A673 (cell line): ENCODE measurements at regions of chr12 and their contacts with region 1.

Region 1: DNA sequence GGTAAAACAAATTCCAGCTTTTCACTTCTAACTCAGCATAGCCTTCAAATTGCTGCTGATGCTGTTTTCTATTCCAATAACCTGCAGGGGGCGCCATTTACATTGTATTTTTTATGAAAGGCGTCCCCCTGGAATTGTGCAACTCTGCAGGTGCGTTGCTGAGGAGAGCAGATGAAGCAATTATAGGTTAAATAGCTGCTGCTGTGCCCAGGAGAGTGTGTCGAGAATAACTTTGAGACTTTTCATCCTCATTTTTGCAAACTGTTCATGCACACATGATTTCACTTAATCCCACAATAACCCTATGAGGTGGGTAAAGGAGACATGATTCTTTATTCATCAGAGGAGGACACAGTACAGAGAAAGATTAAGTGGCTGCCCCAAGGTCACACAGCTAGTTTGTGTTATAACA is 75.7 kb downstream of the MYRFL start:
- DNase-seq: peak; percentile 86
- H3K4me3 ChIP-seq: no peak overlapping the region
- H3K27ac ChIP-seq: no peak overlapping the region
- H3K4me1 ChIP-seq: peaks cover 14% of the 10 kb centered on the region
- H3K27me3 ChIP-seq: peaks cover 30% of the 10 kb centered on the region
- CTCF ChIP-seq: peak; percentile 91

Region 2: DNA sequence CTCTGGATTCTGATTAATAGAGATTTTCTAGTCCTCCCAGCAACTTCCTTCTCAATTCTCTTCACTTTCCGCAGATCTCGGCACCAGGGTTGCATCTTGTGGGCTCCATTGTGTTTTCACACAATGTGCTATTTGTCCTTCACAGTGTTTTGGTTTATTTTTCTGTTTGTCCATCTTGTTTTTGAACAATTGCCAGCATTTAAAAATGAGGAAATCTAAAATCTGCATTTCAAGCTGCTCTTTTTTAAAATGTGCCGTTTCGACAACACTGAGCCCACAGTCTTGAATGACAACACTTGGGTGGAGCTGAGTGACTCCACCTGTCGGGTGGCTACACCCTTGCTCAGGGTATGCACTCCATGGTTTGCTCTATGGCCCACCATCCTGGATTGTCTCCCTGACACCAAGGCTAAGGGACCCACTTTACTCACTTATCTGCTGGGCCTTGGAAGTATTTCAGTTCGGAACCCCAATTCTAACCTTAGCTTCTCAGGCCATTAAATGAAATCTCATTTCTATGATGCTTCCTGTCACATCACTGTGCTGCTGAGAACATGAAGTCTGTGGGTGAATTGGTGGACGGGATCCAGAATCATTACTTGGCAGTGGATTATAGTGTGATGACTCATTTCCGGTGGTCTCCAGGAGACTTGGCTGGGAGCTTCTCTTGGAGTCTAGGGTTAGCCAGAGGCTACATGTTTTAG is 79.1 kb before region 1 on chr12:
- CTCF ChIA-PET with region 1: no interaction called
- POLR2A ChIA-PET with region 1: no interaction called
- intact Hi-C with region 1: no loop called
- DNase-seq: peak; percentile 97
- H3K4me3 ChIP-seq: peak overlapping the region; percentile 32
- H3K27ac ChIP-seq: peak overlapping the region; percentile 81
- H3K4me1 ChIP-seq: peaks cover 32% of the 10 kb centered on the region
- H3K27me3 ChIP-seq: no peaks in the 10 kb centered on the region
- CTCF ChIP-seq: no peak

Region 3: DNA sequence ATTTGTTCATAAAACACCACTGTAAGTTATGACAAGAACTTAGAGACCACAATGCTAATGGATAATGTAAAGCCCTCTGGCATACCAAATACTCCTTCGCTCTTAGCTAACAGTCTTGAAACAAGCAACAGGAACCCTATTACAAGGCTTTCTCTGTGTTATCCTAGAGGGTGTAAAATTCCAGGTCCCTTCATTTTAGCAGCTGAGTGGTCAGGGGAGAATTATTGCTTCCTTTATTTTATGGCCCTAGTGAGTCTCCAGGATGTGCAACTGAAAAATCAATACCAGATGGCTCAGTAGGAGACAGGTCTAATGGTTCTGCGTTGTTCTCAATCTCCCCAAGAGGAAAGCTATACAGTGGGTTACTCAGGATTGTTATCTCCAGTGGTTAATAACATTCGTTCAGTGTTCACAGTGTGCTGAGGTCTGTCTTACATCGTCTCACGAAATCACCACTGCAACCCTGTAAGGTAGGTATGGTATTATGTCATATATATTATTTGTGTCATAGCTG is 169.8 kb after region 1 on chr12:
- CTCF ChIA-PET with region 1: no interaction called
- POLR2A ChIA-PET with region 1: no interaction called
- intact Hi-C with region 1: loop called (anchors 10 kb)
- DNase-seq: peak; percentile 94
- H3K4me3 ChIP-seq: no peak overlapping the region
- H3K27ac ChIP-seq: peak overlapping the region; percentile 40
- H3K4me1 ChIP-seq: peaks cover 33% of the 10 kb centered on the region
- H3K27me3 ChIP-seq: no peaks in the 10 kb centered on the region
- CTCF ChIP-seq: no peak

Region 4: GRCh38 chr12:70242695-70243509 is 342.2 kb after region 1 on chr12 and contains the start of gene CNOT2:
- CTCF ChIA-PET with region 1: no interaction called
- POLR2A ChIA-PET with region 1: no interaction called
- intact Hi-C with region 1: loop called (anchors 2 kb)
- DNase-seq: peak; percentile 93
- H3K4me3 ChIP-seq: peak within 1 kb of the TSS; percentile 69
- H3K27ac ChIP-seq: peak within 1 kb of the TSS; percentile 94
- H3K4me1 ChIP-seq: peaks cover 14% of the 10 kb centered on the region
- H3K27me3 ChIP-seq: no peaks in the 10 kb centered on the region
- CTCF ChIP-seq: no peak
- total RNA-seq, gene CNOT2: 68.9 and 89.0 TPM in 2 replicates

Region 5: DNA sequence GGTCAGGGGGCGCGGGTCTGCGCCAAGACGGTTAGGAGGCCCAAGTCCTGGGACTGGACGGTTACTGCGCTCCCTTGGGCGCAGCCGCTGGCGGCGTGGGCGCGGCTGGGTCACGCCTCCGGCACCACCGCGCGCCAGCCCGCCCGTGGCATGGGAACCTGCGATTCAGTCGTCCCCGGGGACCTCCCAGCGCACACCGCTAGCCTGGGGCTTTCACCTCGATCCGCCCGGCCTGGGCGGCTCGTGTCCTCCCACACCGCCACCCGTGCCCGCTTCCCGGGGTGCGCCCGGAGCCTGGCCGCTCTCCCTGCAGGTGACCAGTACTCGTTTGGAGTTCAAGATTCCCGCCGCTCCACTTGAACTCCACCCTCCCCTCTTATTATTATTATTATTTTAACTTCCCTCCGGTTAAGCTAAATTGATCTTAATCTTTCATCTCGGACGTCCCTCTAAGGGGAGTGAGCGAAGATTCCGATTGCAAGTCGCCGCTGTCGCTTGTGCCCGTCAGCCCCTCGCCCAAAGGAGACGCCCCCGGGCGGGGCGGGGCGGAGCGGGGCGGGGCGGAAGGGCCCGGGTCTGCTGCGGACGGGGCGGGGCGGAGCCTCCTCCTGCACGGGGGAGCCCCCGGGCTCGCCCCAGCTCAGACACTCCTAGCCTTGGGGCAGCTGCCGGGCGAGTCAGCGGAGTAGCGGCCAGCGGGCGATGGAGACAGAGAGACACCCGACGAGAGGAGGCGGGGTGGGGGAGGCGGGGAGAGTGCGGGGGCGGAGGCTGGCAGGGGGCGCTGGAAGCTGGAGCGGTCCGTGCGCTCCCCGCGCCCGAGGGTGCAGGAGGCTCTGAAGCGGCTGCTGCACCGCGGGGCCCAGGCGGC is 465.2 kb after region 1 on chr12 and contains the start of gene KCNMB4:
- CTCF ChIA-PET with region 1: no interaction called
- POLR2A ChIA-PET with region 1: no interaction called
- intact Hi-C with region 1: loop called (anchors 5 kb)
- DNase-seq: peak; percentile 81
- H3K4me3 ChIP-seq: peak within 1 kb of the TSS; percentile 68
- H3K27ac ChIP-seq: no peak within 1 kb of the TSS
- H3K4me1 ChIP-seq: peaks cover 6% of the 10 kb centered on the region
- H3K27me3 ChIP-seq: peaks cover 19% of the 10 kb centered on the region
- CTCF ChIP-seq: 0 out of 2 replicates have a peak, but pooled peaks have one; percentile 9
- total RNA-seq, gene KCNMB4: 1.9 and 2.3 TPM in 2 replicates

Region 6: DNA sequence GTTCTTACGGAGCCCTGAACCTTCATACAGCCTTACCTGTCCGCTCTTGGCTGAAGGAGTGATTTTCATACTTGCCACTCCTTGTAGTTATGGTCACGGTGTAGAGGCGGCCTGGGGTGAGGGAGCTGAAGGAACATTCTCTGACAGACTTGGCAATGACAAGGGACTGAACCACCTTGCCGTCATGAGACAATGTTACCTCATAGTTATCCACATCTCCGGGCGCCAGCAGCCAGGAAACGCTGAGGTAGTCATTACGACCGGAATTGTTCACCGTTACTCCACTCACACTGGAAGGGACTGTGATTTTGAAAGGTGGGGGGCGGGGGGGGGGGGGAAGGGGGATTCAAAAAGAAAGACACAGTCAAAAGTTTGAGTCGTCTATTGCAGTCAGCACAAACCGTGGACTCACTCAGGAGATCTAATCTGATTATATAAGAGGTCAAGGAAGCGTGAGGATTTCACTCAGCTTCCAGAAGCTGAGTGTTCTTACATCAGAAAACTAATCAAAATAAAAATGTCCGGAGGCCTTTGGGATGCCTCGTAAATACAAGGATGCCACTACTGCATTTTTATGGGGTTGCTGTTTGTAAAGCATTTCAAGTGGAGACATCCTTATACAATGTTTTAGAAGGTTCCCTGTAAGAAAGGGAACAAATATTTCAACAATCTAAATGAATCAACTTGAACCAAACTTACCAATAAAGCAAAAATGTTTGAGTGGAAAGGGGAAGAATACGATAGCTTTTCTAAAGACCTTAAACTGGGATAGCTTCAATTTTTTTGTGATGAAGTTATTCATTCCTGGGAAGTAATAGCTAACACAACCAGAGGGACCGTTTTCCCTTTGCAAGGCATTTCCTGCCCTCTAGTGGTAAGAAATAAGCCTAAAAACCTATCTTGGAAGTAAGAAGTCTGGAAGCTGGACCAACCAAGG is 675.9 kb after region 1 on chr12:
- CTCF ChIA-PET with region 1: interaction called, 9 read pairs
- POLR2A ChIA-PET with region 1: no interaction called
- intact Hi-C with region 1: loop called (anchors 1 kb)
- DNase-seq: peak; percentile 86
- H3K4me3 ChIP-seq: no peak overlapping the region
- H3K27ac ChIP-seq: no peak overlapping the region
- H3K4me1 ChIP-seq: peaks cover 6% of the 10 kb centered on the region
- H3K27me3 ChIP-seq: peaks cover 3% of the 10 kb centered on the region
- CTCF ChIP-seq: peak; percentile 79

Region 7: DNA sequence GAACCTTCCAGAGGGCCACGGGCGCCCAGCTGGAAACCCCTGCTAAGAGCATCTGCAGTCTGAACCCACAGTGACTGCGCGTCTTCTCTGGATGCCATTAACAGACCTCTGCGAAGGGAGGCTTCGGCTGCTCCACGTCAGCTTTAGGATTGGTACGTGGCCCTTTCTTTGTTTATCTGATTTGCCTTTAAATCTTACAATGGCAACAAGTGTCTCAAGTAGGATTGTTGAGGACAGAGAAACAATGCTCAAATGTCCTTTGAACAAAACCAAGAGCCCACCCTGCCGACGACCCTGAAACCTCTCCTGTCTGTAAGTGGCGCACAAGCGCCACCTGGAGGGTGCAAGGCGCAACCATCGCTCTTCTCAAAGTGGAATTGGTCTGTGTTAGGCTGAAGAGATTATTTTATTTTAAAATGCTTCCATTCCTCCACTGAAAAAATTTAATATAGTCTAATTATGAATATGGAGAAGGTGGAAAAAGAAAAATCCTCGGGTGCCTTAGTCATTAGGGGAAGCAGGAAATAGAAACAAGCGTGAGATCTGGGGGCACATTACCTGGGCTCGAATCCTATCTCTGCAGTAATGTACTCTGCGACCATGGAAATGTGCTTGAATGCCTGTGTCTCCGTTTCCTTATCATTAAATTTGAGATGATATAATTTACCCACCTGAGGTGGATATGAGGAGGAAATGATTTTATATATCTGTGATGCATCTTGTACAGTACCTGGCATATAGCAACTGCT is 819.1 kb after region 1 on chr12:
- CTCF ChIA-PET with region 1: interaction called, 3 read pairs
- POLR2A ChIA-PET with region 1: no interaction called
- intact Hi-C with region 1: loop called (anchors 5 kb)
- DNase-seq: peak; percentile 58
- H3K4me3 ChIP-seq: no peak overlapping the region
- H3K27ac ChIP-seq: no peak overlapping the region
- H3K4me1 ChIP-seq: peaks cover 11% of the 10 kb centered on the region
- H3K27me3 ChIP-seq: no peaks in the 10 kb centered on the region
- CTCF ChIP-seq: peak; percentile 97